ENCODE measurements at regions of chr7 and their contacts with region 1.

Region 1: GRCh38 chr7:53920011-53920410 is 622.2 kb upstream of the VSTM2A start:
- DNase-seq: no peak
- ATAC-seq: no peak
- H3K4me3 ChIP-seq: no peak overlapping the region
- H3K27ac ChIP-seq: no peak overlapping the region
- H3K4me1 ChIP-seq: no peaks in the 10 kb centered on the region
- H3K27me3 ChIP-seq: no peaks in the 10 kb centered on the region
- CTCF ChIP-seq: no peak

Region 2: GRCh38 chr7:53965716-53966115 is 45.7 kb after region 1 on chr7:
- intact Hi-C with region 1: loop called in 1 of 10 experiments (anchors 5 kb)
- DNase-seq: no peak
- ATAC-seq: no peak
- H3K4me3 ChIP-seq: no peak overlapping the region
- H3K27ac ChIP-seq: no peak overlapping the region
- H3K4me1 ChIP-seq: no peaks in the 10 kb centered on the region
- H3K27me3 ChIP-seq: no peaks in the 10 kb centered on the region
- CTCF ChIP-seq: no peak